GM13976 (cell line): ENCODE measurements at regions of chr10 and their contacts with region 1.

Region 1: DNA sequence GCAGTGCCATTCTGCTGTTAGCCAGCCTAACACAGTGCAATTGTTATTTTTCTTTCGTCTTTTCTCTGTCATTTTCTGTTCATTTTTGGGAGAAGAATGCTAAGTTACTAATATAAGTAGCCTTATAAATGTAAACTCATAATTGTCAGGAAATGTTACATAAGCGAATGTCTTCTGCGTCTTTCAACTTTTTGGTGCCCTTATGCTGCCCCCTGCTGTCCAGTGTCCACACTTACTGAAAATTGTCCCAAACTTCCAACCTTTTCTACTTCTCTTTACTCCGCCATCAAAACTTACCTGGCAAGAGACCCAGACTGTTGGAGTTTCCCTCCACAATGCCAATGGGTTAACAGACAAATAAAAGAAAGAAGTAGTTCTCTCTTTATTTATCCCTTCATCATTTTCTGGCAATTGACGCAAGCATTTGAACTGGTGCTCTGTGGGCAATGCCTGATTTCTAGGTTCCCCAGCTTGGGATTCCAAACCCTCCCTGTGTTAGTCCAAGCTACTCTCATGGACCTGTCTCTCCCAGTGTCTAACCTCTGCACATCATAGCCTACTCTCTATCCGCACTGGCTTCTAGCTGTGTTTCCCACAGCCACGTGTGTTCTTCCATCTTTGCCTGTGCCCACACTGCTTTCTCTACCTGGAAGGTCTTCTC is 21.0 kb upstream of the EPC1 start:
- DNase-seq: peak; percentile 59
- CTCF ChIP-seq: peak; percentile 70

Region 2: GRCh38 chr10:32055813-32056600 is 311.9 kb before region 1 on chr10 and contains the start of gene KIF5B:
- in situ Hi-C with region 1: loop called (anchors 25 kb)
- DNase-seq: peak; percentile 98
- CTCF ChIP-seq: no peak

Region 3: DNA sequence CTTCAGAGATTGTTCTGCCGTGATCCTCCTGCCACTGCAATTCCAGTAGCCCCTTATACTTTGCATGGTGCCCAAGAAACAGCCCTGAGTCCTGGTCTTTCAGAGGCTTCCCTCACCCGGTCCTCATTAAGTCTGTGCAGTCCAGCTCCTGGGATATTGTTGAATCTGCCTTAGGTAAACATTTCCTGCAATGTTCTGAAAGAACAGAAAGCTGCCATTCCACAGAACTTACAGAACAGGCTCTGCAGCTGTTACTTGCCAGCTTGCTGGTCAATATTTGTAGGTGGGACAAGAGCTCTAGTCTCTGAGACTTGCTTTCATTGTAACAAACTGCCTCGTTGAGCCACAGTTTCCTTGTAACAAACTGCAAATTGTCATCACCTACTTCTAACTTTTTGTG is 196.7 kb before region 1 on chr10:
- in situ Hi-C with region 1: no loop called
- DNase-seq: no peak
- CTCF ChIP-seq: no peak